ENCODE measurements at regions of chr6 and their contacts with region 1.

Region 1: DNA sequence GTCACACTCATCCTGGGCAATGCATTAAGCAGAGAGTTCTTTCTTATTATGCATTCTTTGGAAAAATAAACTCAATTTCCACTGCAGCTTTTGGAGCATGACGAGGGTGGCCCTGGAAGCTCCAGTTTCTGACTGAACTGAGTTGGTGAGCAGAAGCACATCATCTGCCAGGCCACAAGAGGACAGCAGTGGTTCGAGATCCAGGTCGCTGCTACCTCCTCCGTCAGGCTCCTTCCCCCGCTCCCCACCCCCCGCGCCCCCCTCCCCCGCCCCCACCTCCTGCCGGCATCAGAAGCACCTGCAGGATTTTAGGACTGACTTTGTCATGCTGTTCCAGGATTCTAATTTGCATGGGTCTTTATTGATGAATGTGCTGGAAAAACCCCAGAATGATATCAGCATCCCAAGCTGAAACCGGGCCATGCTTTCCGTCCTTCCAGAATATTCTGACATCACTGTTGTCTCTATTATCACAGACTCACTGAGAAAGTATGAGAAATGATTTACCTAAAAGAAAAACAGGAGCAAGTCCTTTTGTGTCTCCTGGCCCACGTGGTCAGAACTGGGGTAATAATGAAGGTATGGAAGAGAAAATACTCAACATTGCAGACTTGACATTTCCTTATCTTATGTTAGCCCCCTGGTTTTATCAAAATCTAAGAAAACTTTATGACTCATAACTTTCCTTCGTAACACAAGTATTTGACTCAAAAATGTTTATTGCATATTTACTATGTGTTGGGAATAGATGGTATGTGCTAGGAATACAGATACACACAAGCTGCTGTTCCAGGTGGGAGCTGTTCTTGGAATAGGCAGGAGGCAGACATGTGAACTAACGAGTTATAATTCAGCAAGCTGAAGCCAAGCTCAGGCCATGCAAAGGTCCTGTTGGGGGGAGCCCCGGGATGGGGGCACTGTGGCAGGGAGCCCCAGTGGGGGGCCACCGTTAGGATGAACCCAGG is 220.2 kb upstream of the EXOC2 start:
- DNase-seq: peak; percentile 58
- H3K4me3 Mint-ChIP-seq: no peak overlapping the region
- H3K27ac Mint-ChIP-seq: no peak overlapping the region
- H3K4me1 Mint-ChIP-seq: peaks cover 7% of the 10 kb centered on the region
- H3K27me3 Mint-ChIP-seq: no peaks in the 10 kb centered on the region
- CTCF ChIP-seq: peak; percentile 48

Region 2: DNA sequence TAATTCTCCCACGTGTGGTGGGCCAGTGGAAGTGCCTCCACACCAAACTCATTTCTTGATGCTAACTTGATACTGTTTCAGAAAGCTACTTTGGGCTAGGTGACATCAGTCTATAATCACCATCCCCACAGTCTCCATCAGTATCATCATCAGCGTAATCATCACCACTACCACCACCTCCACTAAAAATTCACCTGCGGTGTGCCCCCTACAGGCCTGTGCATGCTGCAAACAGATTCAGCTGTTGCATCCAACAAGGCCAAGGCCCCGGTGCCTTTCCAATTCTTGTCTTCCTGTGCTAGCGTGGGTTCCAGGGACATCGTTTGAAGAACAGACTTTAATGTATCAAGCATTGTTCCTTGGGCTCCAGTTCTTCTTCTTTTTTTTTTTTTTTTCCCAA is 18.9 kb before region 1 on chr6:
- CTCF ChIA-PET with region 1: no interaction called
- intact Hi-C with region 1: no loop called
- DNase-seq: no peak
- H3K4me3 Mint-ChIP-seq: no peak overlapping the region
- H3K27ac Mint-ChIP-seq: no peak overlapping the region
- H3K4me1 Mint-ChIP-seq: peaks cover 5% of the 10 kb centered on the region
- H3K27me3 Mint-ChIP-seq: no peaks in the 10 kb centered on the region
- CTCF ChIP-seq: no peak

Region 3: DNA sequence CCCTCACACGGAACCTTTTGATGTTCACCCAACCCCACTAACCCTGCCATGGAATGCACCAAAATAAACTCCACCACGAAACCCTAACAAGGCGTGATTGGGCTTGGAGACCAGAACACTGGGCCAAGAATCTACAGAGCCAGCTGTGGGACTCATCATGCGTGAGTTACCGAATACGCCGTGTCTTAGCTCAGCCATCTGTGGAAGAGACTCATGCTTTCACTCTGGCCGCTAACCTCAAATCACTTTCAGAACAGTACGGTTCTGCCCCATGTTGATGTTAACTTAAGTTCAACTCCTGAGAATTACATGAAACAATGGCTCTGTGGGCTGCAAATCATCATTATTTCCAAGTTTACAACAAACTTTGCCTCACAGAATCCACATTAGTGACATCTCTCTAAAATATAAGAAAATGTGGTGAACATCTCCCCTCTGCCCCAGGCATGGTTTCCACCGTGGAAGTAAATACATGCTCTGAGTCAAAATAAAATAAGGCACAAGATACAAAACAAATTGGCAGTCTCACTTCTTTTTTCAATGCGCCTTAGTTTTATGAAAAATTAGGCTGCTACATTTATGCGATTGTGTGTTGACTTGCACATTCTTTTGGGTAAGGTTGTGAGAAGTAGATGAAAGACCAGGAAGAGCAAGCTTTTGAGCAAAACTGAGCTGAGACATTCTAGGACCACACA is 88.6 kb after region 1 on chr6:
- CTCF ChIA-PET with region 1: no interaction called
- intact Hi-C with region 1: no loop called
- DNase-seq: no peak
- H3K4me3 Mint-ChIP-seq: no peak overlapping the region
- H3K27ac Mint-ChIP-seq: no peak overlapping the region
- H3K4me1 Mint-ChIP-seq: no peaks in the 10 kb centered on the region
- H3K27me3 Mint-ChIP-seq: peaks cover 13% of the 10 kb centered on the region
- CTCF ChIP-seq: no peak

Region 4: GRCh38 chr6:1043458-1043836 is 130.3 kb after region 1 on chr6:
- CTCF ChIA-PET with region 1: no interaction called
- intact Hi-C with region 1: no loop called
- DNase-seq: no peak
- H3K4me3 Mint-ChIP-seq: no peak overlapping the region
- H3K27ac Mint-ChIP-seq: no peak overlapping the region
- H3K4me1 Mint-ChIP-seq: peaks cover 47% of the 10 kb centered on the region
- H3K27me3 Mint-ChIP-seq: no peaks in the 10 kb centered on the region
- CTCF ChIP-seq: no peak

Region 5: DNA sequence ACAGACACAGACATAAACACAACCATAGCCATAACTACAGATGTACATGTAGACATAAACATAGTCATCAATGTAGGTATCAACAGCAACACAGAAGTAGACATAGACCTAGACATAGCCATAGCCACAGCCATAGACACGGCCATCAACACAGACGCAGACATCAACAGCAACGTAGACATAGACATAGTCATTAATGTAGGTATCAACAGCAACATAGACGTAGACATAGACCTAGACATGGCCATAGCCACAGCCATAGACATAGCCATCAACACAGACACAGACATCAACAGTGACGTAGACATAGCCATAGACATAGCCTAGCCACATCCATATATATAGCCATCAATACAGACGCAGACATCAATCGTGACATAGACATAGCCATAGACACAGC is 140.4 kb after region 1 on chr6:
- CTCF ChIA-PET with region 1: interaction called, 4 read pairs
- intact Hi-C with region 1: loop called (anchors 5 kb)
- DNase-seq: no peak
- H3K4me3 Mint-ChIP-seq: no peak overlapping the region
- H3K27ac Mint-ChIP-seq: no peak overlapping the region
- H3K4me1 Mint-ChIP-seq: peaks cover 14% of the 10 kb centered on the region
- H3K27me3 Mint-ChIP-seq: no peaks in the 10 kb centered on the region
- CTCF ChIP-seq: no peak

Region 6: DNA sequence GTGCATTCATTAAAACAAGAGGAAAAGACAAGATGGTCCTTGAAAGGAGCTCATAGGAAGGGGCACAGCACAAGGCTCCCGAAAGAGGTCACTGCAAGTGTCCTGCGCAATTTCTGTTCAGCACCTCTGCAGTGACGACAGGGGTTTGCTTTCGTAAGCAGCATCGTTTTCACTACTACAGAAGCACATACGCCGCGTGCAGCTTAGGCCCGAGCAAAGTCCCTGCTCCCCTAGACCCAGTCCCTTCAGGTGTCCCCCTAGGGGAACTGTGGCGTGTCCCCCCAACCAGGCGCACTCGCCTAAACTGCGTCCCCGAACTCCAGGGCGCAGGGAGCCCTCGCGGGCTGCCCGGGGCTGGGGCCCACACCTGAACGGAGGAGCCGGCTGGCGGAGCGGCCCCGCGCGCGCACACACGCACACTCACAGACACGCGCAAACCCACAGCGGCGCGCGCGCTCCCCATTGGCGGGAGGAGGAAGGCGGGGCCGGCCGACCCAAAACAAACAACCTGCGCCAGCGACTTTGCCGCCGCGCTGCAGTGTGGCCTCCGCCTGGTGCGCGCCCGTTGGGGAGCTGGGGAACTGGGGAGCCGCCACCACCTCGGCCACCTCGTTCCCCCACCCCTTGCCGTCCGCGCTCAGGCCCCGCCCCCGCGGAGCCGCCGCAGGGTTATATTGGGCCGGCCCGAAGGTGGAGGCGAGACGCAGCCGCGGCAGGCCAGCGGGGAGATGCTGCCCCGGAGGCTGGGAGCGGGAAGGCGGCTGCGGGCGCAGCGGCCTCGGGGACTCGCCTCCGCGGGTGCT is 398.4 kb after region 1 on chr6 and contains the start of gene FOXQ1:
- CTCF ChIA-PET with region 1: interaction called, 3 read pairs
- intact Hi-C with region 1: loop called (anchors 2 kb)
- DNase-seq: peak; percentile 94
- H3K4me3 Mint-ChIP-seq: peak within 1 kb of the TSS; percentile 76
- H3K27ac Mint-ChIP-seq: peak within 1 kb of the TSS; percentile 82
- H3K4me1 Mint-ChIP-seq: peaks cover 31% of the 10 kb centered on the region
- H3K27me3 Mint-ChIP-seq: no peaks in the 10 kb centered on the region
- CTCF ChIP-seq: no peak
- total RNA-seq, gene FOXQ1: 46.1 and 51.0 TPM in 2 replicates